HepG2 (cell line): ENCODE measurements at regions of chr16 and their contacts with region 1.

Region 1: DNA sequence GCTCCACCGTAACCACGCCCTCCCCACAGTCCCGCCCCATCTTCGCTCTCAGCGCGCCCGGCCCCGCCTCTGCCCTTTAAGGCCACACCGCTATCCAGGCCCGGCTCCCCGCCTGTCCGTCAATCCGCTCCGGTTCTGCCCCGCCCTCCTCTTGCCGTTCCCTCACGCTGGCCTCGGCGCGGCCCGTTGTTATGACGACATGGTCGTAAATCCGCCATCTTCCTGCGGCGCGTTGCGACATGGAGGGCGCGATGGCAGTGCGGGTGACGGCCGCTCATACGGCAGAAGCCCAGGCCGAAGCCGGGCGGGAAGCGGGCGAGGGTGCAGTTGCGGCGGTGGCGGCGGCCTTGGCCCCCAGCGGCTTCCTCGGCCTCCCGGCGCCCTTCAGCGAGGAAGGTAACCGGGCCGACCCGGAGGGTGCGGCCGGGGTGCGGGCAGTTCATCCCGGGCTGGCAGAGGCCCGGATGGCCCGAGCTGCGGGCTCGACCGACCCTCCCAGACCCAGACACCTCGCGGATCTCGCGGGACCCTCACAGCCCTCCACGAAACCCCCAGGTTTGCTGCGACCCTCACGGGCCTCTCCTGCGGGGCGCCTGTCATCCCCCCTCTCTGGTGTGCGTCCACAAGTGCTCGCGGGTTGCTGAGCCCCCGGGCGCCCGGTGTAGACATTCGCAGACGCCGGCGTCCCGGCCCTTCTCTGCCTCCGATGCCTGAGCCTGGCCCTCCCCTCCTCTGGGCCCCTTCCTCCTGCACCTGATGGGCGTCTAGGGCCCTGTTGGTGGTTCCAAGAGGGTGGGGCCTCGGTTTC is at the start of gene E4F1:
- DNase-seq: peak; percentile 97
- ATAC-seq: peak; percentile 84
- H3K4me3 ChIP-seq: peak within 1 kb of the TSS; percentile 78 to 95 (median 79)
- H3K27ac ChIP-seq: peak within 1 kb of the TSS; percentile 80
- H3K4me1 ChIP-seq: peaks cover 46% of the 10 kb centered on the region
- H3K27me3 ChIP-seq: no peaks in the 10 kb centered on the region
- CTCF ChIP-seq: peak; percentile 27; the same call in 1 of the 2 replicates
- EP300 ChIP-seq: no peak
- POLR2A ChIP-seq: peak; percentile 88 to 89
- RAD21 ChIP-seq: no peak
- total RNA-seq, gene E4F1: 10.3 and 19.5 TPM in 2 replicates

Region 2: GRCh38 chr16:2238838-2239675 is 15.5 kb after region 1 on chr16:
- CTCF ChIA-PET with region 1: no interaction called
- POLR2A ChIA-PET with region 1: interaction called, 16 read pairs
- in situ Hi-C with region 1: no loop called
- intact Hi-C with region 1: no loop called
- DNase-seq: no peak
- ATAC-seq: peak; percentile 42
- H3K4me3 ChIP-seq: no peak overlapping the region
- H3K27ac ChIP-seq: peak overlapping the region; percentile 37
- H3K4me1 ChIP-seq: peaks cover 31% of the 10 kb centered on the region
- H3K27me3 ChIP-seq: no peaks in the 10 kb centered on the region
- CTCF ChIP-seq: no peak
- EP300 ChIP-seq: no peak
- POLR2A ChIP-seq: 0 out of 4 replicates have a peak, but pooled peaks of 1 of the 2 experiments have one; percentile 12
- RAD21 ChIP-seq: no peak